ENCODE measurements at regions of chr9 and their contacts with region 1.

Region 1: DNA sequence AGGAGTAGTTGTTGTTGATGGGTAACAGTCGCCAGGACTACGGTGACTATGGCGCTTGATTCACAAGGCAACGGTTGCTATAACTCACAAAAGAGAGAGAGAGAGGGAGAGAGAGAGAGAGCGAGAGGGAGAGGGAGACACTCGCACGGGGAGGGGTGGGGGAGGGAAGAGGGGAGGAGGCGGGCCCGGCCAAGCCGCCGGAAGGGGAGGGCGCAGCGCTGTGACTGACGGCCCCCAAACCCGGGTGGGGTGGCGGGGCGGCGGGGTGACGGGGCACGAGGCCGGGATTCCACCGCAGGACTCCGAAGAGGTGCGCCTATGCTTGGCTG is at the start of gene RFX3:
- DNase-seq: peak; percentile 83
- H3K4me3 Mint-ChIP-seq: peak within 1 kb of the TSS; percentile 87
- H3K27ac Mint-ChIP-seq: peak within 1 kb of the TSS; percentile 99
- H3K4me1 Mint-ChIP-seq: peaks cover 63% of the 10 kb centered on the region
- H3K27me3 Mint-ChIP-seq: peaks cover 2% of the 10 kb centered on the region
- total RNA-seq, gene RFX3: 11.2 and 11.3 TPM in 2 replicates

Region 2: DNA sequence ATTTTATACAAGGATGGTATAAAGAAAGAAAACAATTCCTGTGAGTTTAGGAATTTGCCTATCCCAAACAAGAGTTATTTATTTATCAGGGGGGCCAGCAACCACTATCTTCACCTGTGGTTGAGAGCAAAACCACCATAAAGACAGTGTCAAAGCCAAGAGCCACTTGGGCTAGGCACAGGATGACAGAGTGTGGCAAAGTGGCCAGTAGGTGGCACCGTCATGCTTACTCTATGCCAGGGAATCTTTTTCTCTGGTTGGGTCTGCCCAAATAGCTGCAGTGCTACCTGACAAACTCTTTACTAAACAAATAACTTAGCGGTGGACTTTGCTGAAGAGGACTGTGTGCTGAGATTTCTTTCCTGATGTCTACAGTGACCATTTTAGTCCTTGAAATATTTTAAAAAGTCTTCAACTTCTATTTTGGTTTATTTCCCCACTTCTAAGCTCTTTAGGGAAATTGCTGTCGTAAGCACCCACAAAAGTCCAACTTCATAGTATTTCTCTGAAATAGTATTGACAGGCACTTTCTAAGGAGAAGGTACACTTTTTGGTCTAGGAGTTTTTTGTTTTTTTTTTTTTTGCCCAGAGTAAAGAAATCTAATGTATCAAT is 285.0 kb before region 1 on chr9:
- intact Hi-C with region 1: loop called (anchors 5 kb)
- DNase-seq: peak; percentile 25
- H3K4me3 Mint-ChIP-seq: no peak overlapping the region
- H3K27ac Mint-ChIP-seq: no peak overlapping the region
- H3K4me1 Mint-ChIP-seq: no peaks in the 10 kb centered on the region
- H3K27me3 Mint-ChIP-seq: no peaks in the 10 kb centered on the region

Region 3: DNA sequence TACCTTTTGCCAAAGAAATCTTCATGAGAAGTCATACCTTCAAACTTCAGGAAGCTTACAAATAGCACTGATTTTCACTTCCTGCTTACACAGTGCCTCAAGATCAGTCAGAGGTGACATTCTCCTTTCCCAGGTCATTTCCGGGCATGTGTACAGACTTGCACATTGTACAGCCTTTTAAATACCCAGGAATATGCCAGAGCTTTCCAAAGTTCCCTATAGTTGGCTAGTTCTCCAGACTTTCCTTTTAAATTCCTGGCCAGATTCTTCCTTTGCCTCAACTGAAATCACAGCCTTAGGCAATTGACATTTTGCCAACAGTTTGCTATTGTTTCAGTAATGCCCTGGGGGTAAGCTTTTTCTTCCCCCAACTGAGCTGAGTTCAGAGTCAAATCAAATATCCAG is 47.2 kb before region 1 on chr9:
- intact Hi-C with region 1: loop called (anchors 1 kb)
- DNase-seq: no peak
- H3K4me3 Mint-ChIP-seq: peak overlapping the region; percentile 35
- H3K27ac Mint-ChIP-seq: peak overlapping the region; percentile 82
- H3K4me1 Mint-ChIP-seq: peaks cover 77% of the 10 kb centered on the region
- H3K27me3 Mint-ChIP-seq: no peaks in the 10 kb centered on the region

Region 4: GRCh38 chr9:3664044-3664443 is 138.2 kb after region 1 on chr9:
- intact Hi-C with region 1: no loop called
- DNase-seq: no peak
- H3K4me3 Mint-ChIP-seq: no peak overlapping the region
- H3K27ac Mint-ChIP-seq: no peak overlapping the region
- H3K4me1 Mint-ChIP-seq: no peaks in the 10 kb centered on the region
- H3K27me3 Mint-ChIP-seq: no peaks in the 10 kb centered on the region

Region 5: DNA sequence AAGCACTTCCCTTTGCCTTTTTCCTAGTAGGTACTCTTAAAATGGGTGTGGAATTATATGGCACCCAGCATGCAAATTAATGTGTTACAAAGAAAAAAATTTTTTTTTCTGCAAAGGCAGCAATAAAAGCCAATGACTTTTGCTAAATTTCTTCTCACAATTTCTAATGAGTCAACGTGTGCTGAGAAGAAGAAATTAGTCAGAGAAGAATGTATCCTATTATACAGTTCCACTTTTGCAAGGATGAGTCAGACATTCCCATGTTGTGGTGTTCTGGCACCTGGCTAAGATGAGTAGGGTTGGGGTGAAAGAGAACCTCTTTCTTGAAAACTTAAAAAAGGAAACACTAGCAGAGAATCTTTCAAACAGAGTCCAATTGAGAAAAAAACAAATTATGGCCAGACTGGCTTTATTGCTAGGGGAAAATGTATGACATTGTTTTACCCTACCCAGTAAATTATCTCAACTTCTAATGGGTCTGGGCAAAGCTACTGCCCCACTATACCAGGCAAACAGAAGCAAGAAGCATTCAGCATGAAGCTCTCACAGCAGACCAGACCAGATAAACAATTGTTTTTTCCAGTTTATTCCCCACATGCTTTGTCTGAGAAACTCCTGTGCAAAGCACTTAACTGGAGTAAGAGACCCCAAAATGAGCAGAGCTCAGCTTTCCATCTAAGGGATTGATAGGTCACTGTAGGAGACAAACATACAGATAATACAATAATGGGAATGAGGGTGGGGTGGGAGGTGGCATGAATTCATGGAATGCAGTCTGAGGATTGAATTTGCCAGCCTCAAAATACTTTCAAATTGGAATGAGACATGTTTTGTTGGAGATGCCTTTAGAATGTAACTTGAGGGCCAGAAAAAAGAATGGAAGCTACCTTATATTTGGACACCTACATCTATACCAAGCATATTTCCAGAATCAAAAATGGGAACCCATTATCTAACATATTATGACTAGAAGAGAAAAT is 220.8 kb after region 1 on chr9:
- intact Hi-C with region 1: loop called (anchors 1 kb)
- DNase-seq: no peak
- H3K4me3 Mint-ChIP-seq: peak overlapping the region; percentile 4
- H3K27ac Mint-ChIP-seq: peak overlapping the region; percentile 83
- H3K4me1 Mint-ChIP-seq: peaks cover 41% of the 10 kb centered on the region
- H3K27me3 Mint-ChIP-seq: no peaks in the 10 kb centered on the region

Region 6: DNA sequence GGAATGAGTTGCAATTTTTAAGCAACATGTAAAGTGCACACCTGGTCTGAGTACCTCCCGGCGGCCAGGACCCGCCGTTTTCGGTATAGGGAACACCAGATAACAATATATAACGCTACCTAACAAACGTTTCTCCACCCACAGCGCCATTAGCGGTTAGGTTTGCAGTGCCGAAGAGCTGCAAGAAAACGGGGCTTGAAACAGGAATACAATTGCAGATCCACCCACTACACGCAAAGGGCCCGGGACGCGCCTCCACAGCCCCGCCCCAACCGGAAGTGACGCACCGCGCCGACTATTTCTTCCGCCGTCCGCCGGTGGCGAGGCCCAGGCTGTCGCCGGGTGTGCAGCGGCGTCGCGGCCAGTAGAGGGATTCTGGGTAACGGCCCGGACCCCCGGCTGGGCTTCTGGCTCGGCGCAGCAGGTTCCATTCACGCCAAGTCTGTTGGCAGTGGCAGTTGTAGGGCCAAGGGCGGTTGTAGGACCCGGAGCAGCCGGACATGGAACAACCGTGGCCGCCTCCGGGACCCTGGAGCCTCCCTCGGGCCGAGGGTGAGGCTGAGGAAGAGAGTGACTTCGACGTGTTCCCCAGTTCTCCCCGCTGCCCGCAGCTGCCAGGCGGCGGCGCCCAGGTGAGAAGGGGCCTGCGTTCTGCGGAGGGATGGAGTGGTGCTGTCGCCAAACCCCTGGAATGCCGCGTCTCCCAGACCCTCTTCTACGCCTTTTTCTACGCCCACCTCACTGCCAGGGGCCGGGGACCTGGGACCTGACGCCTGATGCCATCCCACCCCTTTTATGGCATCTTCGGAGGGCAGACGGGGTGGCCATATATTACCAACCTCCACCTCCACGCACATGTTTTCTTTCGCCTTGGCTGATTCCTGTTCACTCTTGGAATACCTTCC is 1153.7 kb after region 1 on chr9 and contains the start of gene CDC37L1:
- intact Hi-C with region 1: loop called (anchors 2 kb)
- DNase-seq: peak; percentile 98
- H3K4me3 Mint-ChIP-seq: no peak within 1 kb of the TSS
- H3K27ac Mint-ChIP-seq: no peak within 1 kb of the TSS
- H3K4me1 Mint-ChIP-seq: peaks cover 7% of the 10 kb centered on the region
- H3K27me3 Mint-ChIP-seq: no peaks in the 10 kb centered on the region
- total RNA-seq, gene CDC37L1: 11.1 and 11.3 TPM in 2 replicates

Measured in activated T-helper 1 cell treated with anti-CD3 and anti-CD28 coated beads, Interleukin-12 subunit alpha, Interleukin-12 subunit beta, Interleukin-2, Interleukin-4 antibody, amounts not matched to agents 30 ng/mL and 10 ng/mL and 1 ng/mL, durations not matched to agents 14 hours and 24 hours and 36 hours (primary cell).